ENCODE measurements at regions of chr9 and their contacts with region 1.

Region 1: DNA sequence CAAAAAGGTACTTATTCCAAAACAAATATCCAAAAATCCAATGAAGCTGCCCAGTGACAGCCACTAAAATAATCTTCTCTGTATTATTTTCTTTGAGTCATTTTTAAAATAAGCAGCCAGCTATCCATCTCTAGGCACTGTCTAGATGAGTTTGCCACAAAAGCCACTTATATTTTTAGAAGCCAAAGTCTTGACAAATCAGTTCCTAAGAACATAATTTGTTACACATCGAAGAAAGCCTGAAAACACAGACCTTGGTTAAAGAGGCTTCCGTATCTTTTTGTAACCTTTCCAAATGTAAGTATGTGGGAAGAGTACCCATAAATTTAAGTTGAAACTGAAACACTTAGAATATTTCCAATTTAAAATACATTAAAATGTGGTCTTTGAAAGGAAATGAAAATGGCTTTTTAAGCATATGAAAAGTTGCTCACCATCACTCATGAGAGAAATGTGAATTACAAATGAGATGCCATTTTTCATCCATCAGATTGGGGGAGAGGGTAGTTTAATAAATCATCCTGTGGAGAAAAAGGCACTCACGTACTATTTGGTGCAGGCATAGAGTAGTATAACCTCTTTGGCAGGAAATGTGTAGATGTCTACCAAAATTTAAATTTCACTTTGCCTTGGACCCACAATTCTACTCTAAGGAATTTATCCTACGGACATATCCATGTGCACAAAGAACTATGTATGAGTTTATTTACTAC is 180.4 kb downstream of the MLLT3 start:
- DNase-seq: no peak
- ATAC-seq: no peak
- H3K4me3 ChIP-seq: no peak overlapping the region
- H3K27ac ChIP-seq: no peak overlapping the region
- H3K4me1 ChIP-seq: no peaks in the 10 kb centered on the region
- H3K27me3 ChIP-seq: no peaks in the 10 kb centered on the region

Region 2: GRCh38 chr9:20382460-20383071 is 59.3 kb before region 1 on chr9:
- intact Hi-C with region 1: loop called in 1 of 4 experiments (anchors 10 kb)
- DNase-seq: no peak
- ATAC-seq: no peak
- H3K4me3 ChIP-seq: no peak overlapping the region
- H3K27ac ChIP-seq: no peak overlapping the region
- H3K4me1 ChIP-seq: no peaks in the 10 kb centered on the region
- H3K27me3 ChIP-seq: no peaks in the 10 kb centered on the region

Region 3: GRCh38 chr9:20670395-20670794 is 228.5 kb after region 1 on chr9:
- intact Hi-C with region 1: no loop called
- DNase-seq: no peak
- ATAC-seq: no peak
- H3K4me3 ChIP-seq: no peak overlapping the region
- H3K27ac ChIP-seq: no peak overlapping the region
- H3K4me1 ChIP-seq: no peaks in the 10 kb centered on the region
- H3K27me3 ChIP-seq: no peaks in the 10 kb centered on the region